Activated CD4-positive, alpha-beta memory T cell treated with anti-CD3 and anti-CD28 coated beads, Interleukin-2, amount 10 ng/mL, durations not matched to agents 7 days and 5 days (primary cell): ENCODE measurements at regions of chr17 and their contacts with region 1.

Region 1: GRCh38 chr17:32461853-32462617 is 17.7 kb downstream of the PSMD11 start:
- DNase-seq: peak; percentile 71
- H3K4me3 Mint-ChIP-seq: no peak overlapping the region
- H3K27ac Mint-ChIP-seq: peak overlapping the region; percentile 37
- H3K4me1 Mint-ChIP-seq: peaks cover 23% of the 10 kb centered on the region
- H3K27me3 Mint-ChIP-seq: no peaks in the 10 kb centered on the region

Region 2: DNA sequence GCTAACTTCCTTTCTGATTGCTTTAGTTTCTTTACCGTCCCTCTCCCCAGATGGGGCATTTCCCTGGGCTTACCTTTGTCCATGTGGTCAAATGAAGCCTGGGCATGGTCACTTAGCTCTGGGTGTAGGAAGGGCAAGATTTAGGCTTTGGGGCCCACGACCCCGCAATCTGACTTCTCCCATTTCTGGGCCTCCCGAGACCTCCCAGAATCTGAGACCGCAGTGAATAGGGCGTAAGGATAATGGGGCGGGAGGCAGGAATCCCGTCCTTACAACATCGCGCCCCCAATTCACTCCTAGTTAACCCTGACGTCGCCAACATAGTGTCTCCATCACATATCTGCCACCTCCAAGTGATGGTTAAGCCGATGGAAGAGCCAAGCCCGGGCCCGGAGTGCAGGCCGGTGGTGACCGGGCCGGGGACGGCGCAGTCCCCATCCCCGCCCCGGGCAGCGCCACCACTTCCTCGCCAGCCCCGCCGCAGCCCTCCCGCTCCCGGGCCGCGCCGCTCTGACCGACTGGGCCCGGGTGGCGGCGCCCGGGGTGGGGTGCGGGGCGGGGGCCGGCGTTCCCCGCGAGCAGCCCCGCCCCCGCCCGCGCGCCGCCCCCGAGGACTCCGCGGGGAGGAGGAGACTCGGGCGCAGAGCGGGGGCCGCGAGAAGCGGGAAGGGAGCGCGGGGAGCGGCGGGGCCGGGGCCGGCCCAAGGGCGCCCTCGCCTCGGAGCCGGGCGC is 196.7 kb before region 1 on chr17 and contains the start of gene RHBDL3:
- CTCF ChIA-PET with region 1: no interaction called
- POLR2A ChIA-PET with region 1: no interaction called
- DNase-seq: no peak
- H3K4me3 Mint-ChIP-seq: peak within 1 kb of the TSS; percentile 72
- H3K27ac Mint-ChIP-seq: no peak within 1 kb of the TSS
- H3K4me1 Mint-ChIP-seq: peaks cover 18% of the 10 kb centered on the region
- H3K27me3 Mint-ChIP-seq: peaks cover 79% of the 10 kb centered on the region
- total RNA-seq, gene RHBDL3: 0.45 to 0.55 TPM

Region 3: GRCh38 chr17:32323811-32324491 is 138.1 kb before region 1 on chr17:
- CTCF ChIA-PET with region 1: no interaction called
- POLR2A ChIA-PET with region 1: no interaction called
- DNase-seq: peak; percentile 51
- H3K4me3 Mint-ChIP-seq: peak overlapping the region; percentile 24
- H3K27ac Mint-ChIP-seq: peak overlapping the region; percentile 32
- H3K4me1 Mint-ChIP-seq: peaks cover 42% of the 10 kb centered on the region
- H3K27me3 Mint-ChIP-seq: no peaks in the 10 kb centered on the region

Region 4: DNA sequence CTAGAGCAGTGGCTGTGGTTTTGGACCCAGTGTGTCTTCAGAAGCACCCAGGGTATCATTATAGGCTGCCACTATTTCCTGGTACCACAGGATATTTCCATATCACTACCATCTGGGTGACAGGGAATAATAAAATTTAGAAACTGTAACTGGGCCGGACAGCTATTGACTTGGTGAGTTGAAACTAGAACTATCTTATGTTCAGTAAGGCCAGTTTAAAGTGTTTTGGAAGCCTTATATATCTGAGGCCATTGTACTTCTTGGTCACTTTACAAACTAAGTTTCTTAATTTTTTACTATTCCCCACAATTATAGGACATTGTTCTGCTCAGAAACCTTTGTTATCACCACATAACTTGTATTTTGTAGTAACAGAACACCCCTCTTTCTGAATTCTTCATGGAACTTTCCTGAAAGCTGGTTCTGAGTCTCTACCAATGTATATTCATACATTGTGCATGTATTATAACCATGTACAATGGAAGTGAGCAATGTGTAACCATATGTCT is 78.1 kb before region 1 on chr17:
- CTCF ChIA-PET with region 1: no interaction called
- POLR2A ChIA-PET with region 1: no interaction called
- DNase-seq: no peak
- H3K4me3 Mint-ChIP-seq: no peak overlapping the region
- H3K27ac Mint-ChIP-seq: no peak overlapping the region
- H3K4me1 Mint-ChIP-seq: peaks cover 3% of the 10 kb centered on the region
- H3K27me3 Mint-ChIP-seq: no peaks in the 10 kb centered on the region

Region 5: DNA sequence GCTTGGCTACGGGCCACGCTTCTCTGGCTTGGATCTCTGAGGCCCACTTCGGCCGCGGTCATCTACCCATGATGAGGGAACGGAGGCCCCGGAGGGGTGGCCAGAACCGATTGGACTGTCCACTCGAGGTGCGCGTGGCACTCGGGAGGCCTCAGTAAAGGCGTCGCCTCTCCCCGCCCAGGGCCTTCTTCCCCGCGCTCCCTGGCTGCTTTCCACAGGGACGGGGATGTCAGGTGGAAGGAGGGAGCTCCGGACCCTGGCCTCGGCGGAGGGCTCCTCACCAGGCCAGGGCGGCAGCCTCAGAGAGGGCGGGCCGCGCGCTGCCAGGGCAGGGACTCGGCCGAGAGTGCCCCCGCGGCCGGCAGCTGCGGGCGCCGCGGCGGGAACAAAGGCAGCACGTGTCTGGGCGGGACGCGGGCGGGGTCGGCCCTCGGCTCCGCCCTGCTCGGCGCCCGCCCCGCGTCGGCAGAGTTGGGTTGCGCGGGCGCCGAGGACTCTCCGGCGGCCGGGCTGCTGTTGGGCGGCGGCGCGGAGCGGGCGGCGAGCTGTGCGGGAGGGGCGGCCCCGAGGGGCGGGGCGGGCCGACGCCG is 24.2 kb after region 1 on chr17:
- CTCF ChIA-PET with region 1: interaction called, 25 read pairs
- POLR2A ChIA-PET with region 1: interaction called, 3 read pairs
- DNase-seq: peak; percentile 67
- H3K4me3 Mint-ChIP-seq: peak overlapping the region; percentile 63
- H3K27ac Mint-ChIP-seq: no peak overlapping the region
- H3K4me1 Mint-ChIP-seq: peaks cover 42% of the 10 kb centered on the region
- H3K27me3 Mint-ChIP-seq: no peaks in the 10 kb centered on the region

Region 6: GRCh38 chr17:32508926-32509325 is 46.9 kb after region 1 on chr17:
- CTCF ChIA-PET with region 1: no interaction called
- POLR2A ChIA-PET with region 1: no interaction called
- DNase-seq: no peak
- H3K4me3 Mint-ChIP-seq: no peak overlapping the region
- H3K27ac Mint-ChIP-seq: no peak overlapping the region
- H3K4me1 Mint-ChIP-seq: peaks cover 20% of the 10 kb centered on the region
- H3K27me3 Mint-ChIP-seq: peaks cover 3% of the 10 kb centered on the region

Region 7: GRCh38 chr17:32519228-32520103 is 57.4 kb after region 1 on chr17:
- CTCF ChIA-PET with region 1: interaction called, 11 read pairs
- POLR2A ChIA-PET with region 1: no interaction called
- DNase-seq: peak; percentile 85
- H3K4me3 Mint-ChIP-seq: peak overlapping the region; percentile 66
- H3K27ac Mint-ChIP-seq: peak overlapping the region; percentile 95
- H3K4me1 Mint-ChIP-seq: peaks cover 72% of the 10 kb centered on the region
- H3K27me3 Mint-ChIP-seq: no peaks in the 10 kb centered on the region

Region 8: DNA sequence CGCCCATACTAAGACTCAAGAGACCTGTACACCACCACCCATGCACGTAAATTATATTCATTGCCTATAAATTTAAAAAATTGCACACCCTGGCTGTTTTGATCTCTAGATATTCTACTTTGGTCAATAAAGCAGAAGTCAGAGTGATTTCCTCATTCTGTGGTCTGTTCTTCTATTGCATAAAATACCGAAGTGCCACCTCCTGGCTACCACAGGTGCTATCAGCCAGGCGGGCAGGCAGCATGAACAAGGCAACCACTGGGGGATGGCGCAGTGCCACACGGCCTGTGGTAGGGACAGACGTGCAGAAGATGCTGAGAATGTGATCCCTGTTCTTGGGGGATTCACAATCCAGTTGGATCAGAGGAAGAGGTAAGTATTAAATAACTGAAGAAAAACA is 147.1 kb after region 1 on chr17:
- CTCF ChIA-PET with region 1: interaction called, 11 read pairs
- POLR2A ChIA-PET with region 1: no interaction called
- DNase-seq: peak; percentile 79
- H3K4me3 Mint-ChIP-seq: no peak overlapping the region
- H3K27ac Mint-ChIP-seq: no peak overlapping the region
- H3K4me1 Mint-ChIP-seq: peaks cover 6% of the 10 kb centered on the region
- H3K27me3 Mint-ChIP-seq: no peaks in the 10 kb centered on the region

Region 9: DNA sequence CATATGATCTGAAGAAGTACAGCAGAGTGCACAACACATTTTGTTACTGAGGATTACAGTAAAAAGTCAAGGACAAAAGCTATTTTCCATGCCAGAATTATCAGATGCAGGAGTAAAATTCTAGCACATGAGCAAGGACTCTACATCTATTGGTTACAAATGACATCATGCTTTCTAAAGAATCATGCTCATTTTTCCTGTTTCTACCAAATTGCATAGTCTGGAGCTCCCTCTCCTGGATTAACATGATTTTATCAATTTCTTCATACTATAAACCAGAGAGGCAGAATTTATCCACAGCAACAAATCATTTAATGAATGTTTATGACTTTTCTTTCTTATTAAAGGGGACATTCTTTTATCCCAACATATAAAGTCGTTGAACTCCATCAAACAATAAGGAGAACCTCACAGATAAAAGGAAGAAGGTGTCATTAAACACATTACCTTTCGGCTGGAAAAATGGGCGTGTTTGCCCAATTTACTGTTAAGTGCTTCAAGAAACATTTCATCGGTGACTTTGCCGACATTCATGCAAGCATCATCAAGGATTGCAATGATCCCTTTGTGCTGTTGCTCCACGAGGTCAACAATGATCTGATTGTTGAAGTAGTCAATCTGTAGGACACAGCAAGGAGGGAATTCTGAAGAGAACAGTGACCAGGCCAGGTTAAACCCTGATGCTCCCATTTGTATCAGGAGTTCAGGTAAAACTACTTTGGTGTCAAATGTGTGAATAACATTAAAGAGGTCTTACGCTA is 293.2 kb after region 1 on chr17:
- CTCF ChIA-PET with region 1: interaction called, 10 read pairs
- POLR2A ChIA-PET with region 1: no interaction called
- DNase-seq: no peak
- H3K4me3 Mint-ChIP-seq: no peak overlapping the region
- H3K27ac Mint-ChIP-seq: no peak overlapping the region
- H3K4me1 Mint-ChIP-seq: peaks cover 11% of the 10 kb centered on the region
- H3K27me3 Mint-ChIP-seq: no peaks in the 10 kb centered on the region